Activated B cell treated with CpG ODN at 0.5 μM for 24 hours (primary cell): ENCODE measurements at regions of chr3 and their contacts with region 1.

Region 1: GRCh38 chr3:10192953-10193691 is 28.4 kb downstream of the IRAK2 start:
- DNase-seq: peak; percentile 53
- ATAC-seq: peak; percentile 58
- H3K4me3 Mint-ChIP-seq: peak overlapping the region; percentile 79
- H3K27ac Mint-ChIP-seq: peak overlapping the region; percentile 99
- H3K4me1 Mint-ChIP-seq: peaks cover 88% of the 10 kb centered on the region
- H3K27me3 Mint-ChIP-seq: no peaks in the 10 kb centered on the region
- CTCF ChIP-seq: no peak

Region 2: DNA sequence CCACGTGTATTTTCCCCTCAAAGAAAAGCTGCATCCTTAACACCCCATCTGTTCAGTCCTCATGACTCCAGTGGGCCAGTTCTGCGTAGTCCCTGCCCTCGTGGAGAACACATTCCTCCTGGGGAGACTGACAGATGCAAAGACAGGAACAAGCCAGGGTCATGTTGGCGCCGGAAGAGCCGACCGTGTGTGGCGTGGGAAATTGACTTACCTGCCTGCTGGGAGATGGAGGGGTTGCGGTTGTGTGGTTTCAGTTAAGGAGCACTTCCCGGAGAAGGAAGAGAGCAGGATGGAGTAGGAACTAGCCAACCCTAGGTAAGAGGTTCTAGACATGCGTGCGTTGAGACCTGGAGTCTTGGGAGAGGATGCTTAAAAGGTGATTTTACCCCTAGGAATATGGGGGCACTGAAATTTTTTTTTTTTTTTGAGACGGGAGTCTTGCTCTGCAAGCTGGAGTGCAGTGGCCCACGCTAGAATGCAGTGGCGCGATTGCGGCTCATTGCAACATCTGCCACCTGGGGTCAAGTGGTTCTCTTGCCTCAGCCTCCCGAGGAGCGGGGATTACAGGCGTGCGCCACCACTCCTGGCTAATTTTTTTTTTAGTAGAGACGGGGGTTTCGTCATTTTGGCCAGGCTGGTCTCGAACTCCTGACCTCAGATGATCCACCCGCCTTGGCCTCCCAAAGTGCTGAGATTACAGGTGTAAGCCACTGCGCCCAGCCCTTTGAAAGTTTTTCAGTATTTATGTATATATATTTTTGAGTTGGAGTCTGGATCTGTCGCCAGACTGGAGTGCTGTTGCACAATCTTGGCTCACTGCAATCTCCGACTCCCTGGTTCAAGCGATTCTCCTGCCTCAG is 50.2 kb before region 1 on chr3:
- CTCF ChIA-PET with region 1: interaction called, 3 read pairs
- POLR2A ChIA-PET with region 1: interaction called, 43 read pairs
- intact Hi-C with region 1: loop called (anchors 1 kb)
- DNase-seq: no peak
- ATAC-seq: no peak
- H3K4me3 Mint-ChIP-seq: peak overlapping the region; percentile 97
- H3K27ac Mint-ChIP-seq: peak overlapping the region; percentile 95
- H3K4me1 Mint-ChIP-seq: peaks cover 42% of the 10 kb centered on the region
- H3K27me3 Mint-ChIP-seq: no peaks in the 10 kb centered on the region
- CTCF ChIP-seq: no peak

Region 3: DNA sequence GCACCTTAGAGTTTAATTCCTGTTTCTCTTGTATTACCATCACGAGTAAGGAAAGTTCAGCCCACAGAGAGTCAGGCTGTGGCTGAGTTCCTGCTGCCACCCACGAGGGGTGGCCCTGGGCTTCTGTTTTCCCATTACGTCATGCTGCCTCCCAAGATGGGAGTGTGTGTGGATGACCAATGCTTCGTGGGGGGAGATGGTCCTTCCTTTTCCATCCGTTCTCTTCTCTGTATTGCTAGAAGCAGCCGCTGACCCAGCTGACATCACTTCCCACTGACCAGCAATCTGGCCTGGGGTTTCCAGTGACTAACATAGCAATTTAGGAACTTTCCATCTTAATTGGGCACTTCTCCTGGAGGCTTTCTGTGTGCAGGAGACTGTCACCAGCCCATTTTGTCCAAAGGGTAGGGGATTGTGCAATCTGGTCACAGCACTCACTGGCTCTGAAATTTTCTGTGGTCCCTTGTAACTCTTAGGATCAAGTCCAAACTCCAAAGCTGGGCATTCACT is 19.1 kb before region 1 on chr3:
- CTCF ChIA-PET with region 1: interaction called, 3 read pairs
- POLR2A ChIA-PET with region 1: interaction called, 13 read pairs
- intact Hi-C with region 1: no loop called
- DNase-seq: no peak
- ATAC-seq: peak; percentile 59
- H3K4me3 Mint-ChIP-seq: no peak overlapping the region
- H3K27ac Mint-ChIP-seq: peak overlapping the region; percentile 70
- H3K4me1 Mint-ChIP-seq: peaks cover 36% of the 10 kb centered on the region
- H3K27me3 Mint-ChIP-seq: no peaks in the 10 kb centered on the region
- CTCF ChIP-seq: no peak

Region 4: GRCh38 chr3:10213156-10213792 is 20.2 kb after region 1 on chr3:
- CTCF ChIA-PET with region 1: interaction called, 5 read pairs
- POLR2A ChIA-PET with region 1: interaction called, 53 read pairs
- intact Hi-C with region 1: no loop called
- DNase-seq: no peak
- ATAC-seq: peak; percentile 89
- H3K4me3 Mint-ChIP-seq: peak overlapping the region; percentile 25
- H3K27ac Mint-ChIP-seq: peak overlapping the region; percentile 81
- H3K4me1 Mint-ChIP-seq: peaks cover 30% of the 10 kb centered on the region
- H3K27me3 Mint-ChIP-seq: no peaks in the 10 kb centered on the region
- CTCF ChIP-seq: no peak

Region 5: GRCh38 chr3:10224784-10225665 is 31.9 kb after region 1 on chr3:
- CTCF ChIA-PET with region 1: interaction called, 43 read pairs
- POLR2A ChIA-PET with region 1: interaction called, 148 read pairs
- intact Hi-C with region 1: loop called (anchors 1 kb)
- DNase-seq: peak; percentile 32
- ATAC-seq: peak; percentile 63
- H3K4me3 Mint-ChIP-seq: peak overlapping the region; percentile 48
- H3K27ac Mint-ChIP-seq: peak overlapping the region; percentile 61
- H3K4me1 Mint-ChIP-seq: peaks cover 65% of the 10 kb centered on the region
- H3K27me3 Mint-ChIP-seq: no peaks in the 10 kb centered on the region
- CTCF ChIP-seq: peak; percentile 85